Activated CD4-positive, alpha-beta T cell treated with anti-CD3 and anti-CD28 coated beads, Interleukin-2, amount 10 ng/mL, durations not matched to agents 24 days and 14 days (primary cell): ENCODE measurements at regions of chr9 and their contacts with region 1.

Region 1: GRCh38 chr9:5301544-5301943 is 3.0 kb downstream of the RLN2 start:
- DNase-seq: no peak
- H3K4me3 Mint-ChIP-seq: peak overlapping the region; percentile 11
- H3K27ac Mint-ChIP-seq: peak overlapping the region; percentile 37
- H3K4me1 Mint-ChIP-seq: peaks cover 11% of the 10 kb centered on the region
- H3K27me3 Mint-ChIP-seq: no peaks in the 10 kb centered on the region

Region 2: GRCh38 chr9:4904322-4905134 is 397.0 kb before region 1 on chr9:
- intact Hi-C with region 1: no loop called
- DNase-seq: no peak
- H3K4me3 Mint-ChIP-seq: no peak overlapping the region
- H3K27ac Mint-ChIP-seq: no peak overlapping the region
- H3K4me1 Mint-ChIP-seq: peaks cover 4% of the 10 kb centered on the region
- H3K27me3 Mint-ChIP-seq: no peaks in the 10 kb centered on the region

Region 3: GRCh38 chr9:5593904-5594303 is 292.4 kb after region 1 on chr9:
- intact Hi-C with region 1: loop called (anchors 10 kb)
- DNase-seq: no peak
- H3K4me3 Mint-ChIP-seq: no peak overlapping the region
- H3K27ac Mint-ChIP-seq: no peak overlapping the region
- H3K4me1 Mint-ChIP-seq: peaks cover 24% of the 10 kb centered on the region
- H3K27me3 Mint-ChIP-seq: no peaks in the 10 kb centered on the region